Heart right ventricle (tissue), 16 donors: ENCODE measurements at regions of chr15 and their contacts with region 1.

Region 1: DNA sequence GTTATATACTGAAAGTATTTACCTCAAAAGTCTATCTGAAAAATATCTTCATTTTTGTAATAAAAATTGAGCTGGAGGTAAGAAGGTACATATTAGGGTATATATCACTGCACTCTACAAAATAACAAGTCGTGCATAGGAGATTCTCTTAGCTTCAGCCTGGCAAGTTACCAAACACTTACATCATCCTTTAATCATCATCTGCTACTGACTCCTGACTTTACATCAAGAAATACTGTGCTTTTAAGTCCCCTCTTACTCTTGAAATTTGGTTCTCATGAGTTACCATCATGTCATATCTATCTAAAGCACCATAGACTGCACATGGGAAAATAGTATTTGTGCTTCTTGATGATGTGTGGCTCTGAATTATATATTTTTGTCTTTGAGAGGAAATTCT is 50.8 kb downstream of the LYSMD4 start:
- DNase-seq: no peak
- ATAC-seq: peak in 6 of 8 donors; percentile 37 to 56 (median 54)
- H3K4me3 ChIP-seq: no peak overlapping the region
- H3K27ac ChIP-seq: peak overlapping the region in 9 of 10 donors; percentile 33 to 84 (median 68)
- H3K4me1 ChIP-seq: peaks cover 3 to 41% (median 22%) of the 10 kb centered on the region in 9 donors
- H3K27me3 ChIP-seq: no peaks in the 10 kb centered on the region
- CTCF ChIP-seq: no peak

Region 2: GRCh38 chr15:99578809-99579208 is 103.6 kb before region 1 on chr15:
- intact Hi-C with region 1: loop called in 2 of 10 experiments (anchors 5 to 10 kb)
- DNase-seq: no peak
- ATAC-seq: no peak
- H3K4me3 ChIP-seq: no peak overlapping the region
- H3K27ac ChIP-seq: peak overlapping the region in 1 of 10 donors; percentile 14
- H3K4me1 ChIP-seq: peaks cover 8 to 99% (median 63%) of the 10 kb centered on the region in 9 donors
- H3K27me3 ChIP-seq: no peaks in the 10 kb centered on the region
- CTCF ChIP-seq: no peak

Region 3: DNA sequence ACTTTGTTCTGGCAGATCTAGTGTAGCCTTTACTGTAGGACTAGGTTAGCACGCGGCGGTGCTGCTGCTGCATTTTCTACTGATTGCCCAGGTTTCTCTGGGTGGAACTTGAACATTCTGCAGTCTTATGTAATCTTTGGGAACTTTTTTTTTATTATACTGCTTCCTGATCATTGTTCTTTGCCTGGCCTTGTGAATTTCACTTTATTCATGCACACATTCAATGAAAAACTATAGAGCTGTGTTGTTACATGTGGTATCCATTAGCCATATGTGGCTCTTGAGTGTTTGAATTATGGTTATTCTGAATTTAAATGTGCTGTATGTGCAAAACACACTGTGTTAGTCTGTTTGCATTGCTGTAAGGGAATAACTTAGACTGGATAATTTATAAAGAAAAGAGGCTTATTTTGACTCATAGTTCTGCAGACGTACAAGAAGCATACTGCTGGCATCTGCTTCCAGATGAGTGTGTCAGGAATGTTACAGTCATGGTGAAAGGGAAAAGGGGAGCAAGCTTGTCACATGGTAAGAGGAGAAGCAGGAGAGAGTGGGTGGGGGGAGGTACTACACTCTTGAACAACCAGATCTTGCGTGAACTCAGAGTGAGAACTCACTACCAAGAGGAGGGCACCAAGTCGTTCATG is 90.2 kb before region 1 on chr15:
- intact Hi-C with region 1: loop called in 1 of 10 experiments (anchors 5 kb)
- DNase-seq: no peak
- ATAC-seq: peak in 7 of 8 donors; percentile 44 to 61 (median 47)
- H3K4me3 ChIP-seq: no peak overlapping the region
- H3K27ac ChIP-seq: peak overlapping the region in 1 of 10 donors; percentile 43
- H3K4me1 ChIP-seq: peaks cover 0 to 83% (median 67%) of the 10 kb centered on the region in 9 donors
- H3K27me3 ChIP-seq: no peaks in the 10 kb centered on the region
- CTCF ChIP-seq: no peak

Region 4: DNA sequence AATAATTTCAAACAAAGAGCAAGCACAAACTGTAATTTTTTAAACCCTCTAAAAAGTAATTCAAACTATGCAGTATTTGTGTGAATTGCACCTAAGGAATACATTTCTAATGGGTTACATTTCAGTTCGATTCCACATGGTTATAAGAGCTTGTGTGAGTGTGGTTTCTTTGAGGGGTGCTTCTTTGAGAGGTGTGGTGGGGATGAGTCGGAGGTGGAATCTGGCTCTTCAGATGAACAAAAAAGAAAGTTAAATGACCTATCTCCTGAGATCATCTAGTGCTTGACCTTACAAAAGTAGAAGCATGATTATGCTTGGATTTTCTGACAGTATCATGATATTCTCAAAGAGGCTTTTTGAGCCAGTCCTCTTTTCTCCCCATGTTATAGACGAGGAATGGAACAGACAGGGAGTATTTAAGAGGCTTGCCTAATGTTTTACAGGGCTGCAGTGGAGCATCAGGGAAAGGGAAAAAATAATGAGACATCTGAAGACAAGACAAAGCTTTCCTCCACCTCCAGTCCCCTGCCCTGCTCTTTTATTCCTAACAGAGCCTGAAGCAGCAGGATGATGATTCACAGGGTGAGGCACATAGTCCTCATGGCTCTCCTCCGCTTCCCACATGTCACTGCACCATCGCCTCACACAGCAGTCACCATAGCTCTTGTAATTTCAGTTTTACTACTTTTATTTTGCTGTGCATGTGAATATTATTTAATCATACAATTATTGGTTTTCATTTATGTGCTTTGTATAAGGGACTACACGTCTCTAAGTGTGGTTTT is 31.2 kb before region 1 on chr15:
- intact Hi-C with region 1: no loop called
- DNase-seq: no peak
- ATAC-seq: peak in 3 of 8 donors; percentile 44 to 58 (median 44)
- H3K4me3 ChIP-seq: no peak overlapping the region
- H3K27ac ChIP-seq: no peak overlapping the region
- H3K4me1 ChIP-seq: peaks cover 0 to 20% (median 3%) of the 10 kb centered on the region in 9 donors
- H3K27me3 ChIP-seq: no peaks in the 10 kb centered on the region
- CTCF ChIP-seq: no peak